Natural killer cell (primary cell): ENCODE measurements at regions of chr18 and their contacts with region 1.

Region 1: GRCh38 chr18:76492669-76493212 is 2.3 kb downstream of the ZNF516 start:
- DNase-seq: peak; percentile 97 to 100
- ATAC-seq: peak; percentile 61 to 89 (median 80)
- H3K4me3 ChIP-seq: peak overlapping the region; percentile 82
- H3K4me3 Mint-ChIP-seq: peak overlapping the region; percentile 98
- H3K27ac ChIP-seq: peak overlapping the region; percentile 57
- H3K27ac Mint-ChIP-seq: peak overlapping the region; percentile 88 to 98
- H3K4me1 ChIP-seq: peaks cover 36% of the 10 kb centered on the region
- H3K4me1 Mint-ChIP-seq: peaks cover 38 to 55% of the 10 kb centered on the region in 2 donors
- H3K27me3 ChIP-seq: peaks cover 2% of the 10 kb centered on the region
- H3K27me3 Mint-ChIP-seq: no peaks in the 10 kb centered on the region
- CTCF ChIP-seq: no peak

Region 2: GRCh38 chr18:75694292-75694691 is 798.4 kb before region 1 on chr18:
- intact Hi-C with region 1: no loop called
- DNase-seq: no peak
- ATAC-seq: no peak
- H3K4me3 ChIP-seq: no peak overlapping the region
- H3K4me3 Mint-ChIP-seq: no peak overlapping the region
- H3K27ac ChIP-seq: no peak overlapping the region
- H3K27ac Mint-ChIP-seq: no peak overlapping the region
- H3K4me1 ChIP-seq: no peaks in the 10 kb centered on the region
- H3K4me1 Mint-ChIP-seq: no peaks in the 10 kb centered on the region
- H3K27me3 ChIP-seq: no peaks in the 10 kb centered on the region
- H3K27me3 Mint-ChIP-seq: no peaks in the 10 kb centered on the region
- CTCF ChIP-seq: no peak

Region 3: GRCh38 chr18:76416911-76417310 is 75.8 kb before region 1 on chr18:
- intact Hi-C with region 1: loop called (anchors 2 kb)
- DNase-seq: no peak
- ATAC-seq: no peak
- H3K4me3 ChIP-seq: no peak overlapping the region
- H3K4me3 Mint-ChIP-seq: peak overlapping the region; percentile 25
- H3K27ac ChIP-seq: no peak overlapping the region
- H3K27ac Mint-ChIP-seq: peak overlapping the region in 1 of 2 donors; percentile 10
- H3K4me1 ChIP-seq: peaks cover 25% of the 10 kb centered on the region
- H3K4me1 Mint-ChIP-seq: peaks cover 68 to 80% of the 10 kb centered on the region in 2 donors
- H3K27me3 ChIP-seq: no peaks in the 10 kb centered on the region
- H3K27me3 Mint-ChIP-seq: no peaks in the 10 kb centered on the region
- CTCF ChIP-seq: no peak

Region 4: GRCh38 chr18:76450452-76451395 is 42.0 kb before region 1 on chr18:
- intact Hi-C with region 1: loop called (anchors 2 kb)
- DNase-seq: peak in 1 of 2 donors; percentile 34
- ATAC-seq: peak; percentile 25 to 56 (median 46)
- H3K4me3 ChIP-seq: peak overlapping the region; percentile 56
- H3K4me3 Mint-ChIP-seq: peak overlapping the region; percentile 97
- H3K27ac ChIP-seq: peak overlapping the region; percentile 30
- H3K27ac Mint-ChIP-seq: peak overlapping the region; percentile 81 to 92
- H3K4me1 ChIP-seq: peaks cover 32% of the 10 kb centered on the region
- H3K4me1 Mint-ChIP-seq: peaks cover 79 to 86% of the 10 kb centered on the region in 2 donors
- H3K27me3 ChIP-seq: no peaks in the 10 kb centered on the region
- H3K27me3 Mint-ChIP-seq: no peaks in the 10 kb centered on the region
- CTCF ChIP-seq: no peak

Region 5: GRCh38 chr18:76476665-76477561 is 15.8 kb before region 1 on chr18:
- intact Hi-C with region 1: loop called (anchors 2 kb)
- DNase-seq: no peak
- ATAC-seq: peak; percentile 22 to 61 (median 60)
- H3K4me3 ChIP-seq: peak overlapping the region; percentile 19
- H3K4me3 Mint-ChIP-seq: peak overlapping the region; percentile 87
- H3K27ac ChIP-seq: peak overlapping the region; percentile 23
- H3K27ac Mint-ChIP-seq: peak overlapping the region; percentile 48 to 86
- H3K4me1 ChIP-seq: peaks cover 4% of the 10 kb centered on the region
- H3K4me1 Mint-ChIP-seq: peaks cover 54 to 60% of the 10 kb centered on the region in 2 donors
- H3K27me3 ChIP-seq: no peaks in the 10 kb centered on the region
- H3K27me3 Mint-ChIP-seq: no peaks in the 10 kb centered on the region
- CTCF ChIP-seq: no peak